ENCODE measurements at regions of chr15 and their contacts with region 1.

Region 1: DNA sequence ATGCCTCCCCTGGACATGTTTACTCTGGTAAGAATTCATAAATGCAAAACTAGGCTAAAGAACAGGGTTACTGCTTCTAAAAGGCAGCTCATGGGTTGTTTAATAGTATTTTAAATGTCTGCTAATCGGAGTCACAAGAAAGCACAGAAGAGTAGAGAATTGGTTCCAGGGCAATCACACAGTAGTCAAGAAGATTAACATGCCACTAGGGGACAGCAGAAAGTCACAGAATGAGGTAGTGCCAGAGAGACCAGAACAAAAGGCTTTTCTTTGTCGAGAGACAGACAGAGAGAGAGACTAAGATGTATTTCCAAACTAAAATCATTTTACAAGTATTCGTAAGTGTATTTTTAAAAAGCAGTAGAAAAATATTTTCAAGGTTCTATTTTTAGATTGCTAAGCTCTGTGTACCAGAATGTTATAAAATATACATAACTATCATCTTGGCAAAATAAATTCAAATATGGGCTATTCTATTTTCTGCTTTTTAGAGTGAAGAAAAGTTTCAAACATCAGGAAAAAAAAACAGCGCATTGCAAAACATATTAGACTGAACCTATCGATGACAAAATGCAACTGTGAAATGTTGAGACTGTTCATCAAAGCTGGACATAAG is 78.3 kb upstream of the CDIN1 start:
- DNase-seq: no peak
- ATAC-seq: peak; percentile 92

Region 2: GRCh38 chr15:35519541-35520149 is 981.5 kb before region 1 on chr15:
- intact Hi-C with region 1: loop called (anchors 5 kb)
- DNase-seq: no peak
- ATAC-seq: no peak

Region 3: GRCh38 chr15:35751413-35752133 is 749.6 kb before region 1 on chr15:
- intact Hi-C with region 1: loop called (anchors 5 kb)
- DNase-seq: no peak
- ATAC-seq: peak; percentile 79

Region 4: DNA sequence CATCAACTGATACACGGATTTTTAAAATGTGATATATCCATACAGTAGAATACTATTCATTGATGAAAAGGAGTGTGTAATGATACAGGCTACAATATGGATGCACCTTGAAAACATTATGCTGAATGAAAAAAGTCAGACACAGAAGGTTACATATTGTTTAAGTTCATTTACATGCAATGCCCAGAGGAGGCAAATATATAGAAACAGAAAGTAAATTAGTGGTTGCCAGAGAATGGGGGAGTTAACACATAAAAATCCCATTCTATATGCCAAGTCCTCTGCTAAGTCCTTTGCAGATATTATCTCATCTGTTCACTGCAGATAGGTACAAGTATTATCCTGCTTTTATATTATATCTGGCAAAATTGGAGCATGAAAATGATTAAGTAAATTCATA is 56.2 kb after region 1 on chr15:
- intact Hi-C with region 1: no loop called
- DNase-seq: no peak
- ATAC-seq: no peak

Region 5: GRCh38 chr15:36598529-36599177 is 97.5 kb after region 1 on chr15:
- intact Hi-C with region 1: loop called (anchors 2 kb)
- DNase-seq: no peak
- ATAC-seq: no peak

Region 6: GRCh38 chr15:36709653-36710052 is 208.5 kb after region 1 on chr15:
- intact Hi-C with region 1: no loop called
- DNase-seq: no peak
- ATAC-seq: no peak

Region 7: GRCh38 chr15:36877796-36878683 is 376.9 kb after region 1 on chr15:
- intact Hi-C with region 1: loop called (anchors 5 kb)
- DNase-seq: no peak
- ATAC-seq: peak; percentile 61

Region 8: DNA sequence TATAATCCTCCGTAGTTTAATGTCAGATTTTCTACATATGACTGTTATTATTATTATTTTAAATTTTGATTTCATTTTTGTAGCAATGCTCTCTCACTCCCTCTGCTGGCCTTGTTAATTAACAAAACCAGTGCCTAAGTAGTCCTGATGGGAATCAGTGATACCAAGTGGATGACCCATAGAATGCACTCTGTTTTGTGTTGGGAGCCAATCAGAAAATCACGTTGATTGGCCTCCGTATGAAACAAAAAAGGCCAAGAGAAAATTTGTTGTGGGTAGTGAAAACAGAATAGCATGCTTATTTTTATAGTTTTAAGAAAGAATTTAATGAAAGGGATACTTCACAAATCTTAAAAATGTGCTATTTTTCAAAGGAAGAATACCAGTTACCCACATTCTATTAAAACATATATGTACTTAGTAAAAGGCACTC is 633.5 kb after region 1 on chr15:
- intact Hi-C with region 1: loop called (anchors 5 kb)
- DNase-seq: no peak
- ATAC-seq: peak; percentile 63